ENCODE measurements at regions of chr4 and their contacts with region 1.

Region 1: GRCh38 chr4:38396845-38397547 is 267.0 kb upstream of the KLF3 start:
- DNase-seq: no peak
- ATAC-seq: no peak
- H3K4me3 ChIP-seq: no peak overlapping the region
- H3K27ac ChIP-seq: no peak overlapping the region
- H3K4me1 ChIP-seq: no peaks in the 10 kb centered on the region
- H3K27me3 ChIP-seq: peaks cover 3% of the 10 kb centered on the region
- CTCF ChIP-seq: no peak
- POLR2A ChIP-seq: no peak
- RAD21 ChIP-seq: no peak

Region 2: GRCh38 chr4:38366456-38366855 is 30.5 kb before region 1 on chr4:
- CTCF ChIA-PET with region 1: no interaction called
- POLR2A ChIA-PET with region 1: no interaction called
- dilution Hi-C with region 1: no loop called
- in situ Hi-C with region 1: no loop called
- intact Hi-C with region 1: loop called (anchors 2 kb)
- DNase-seq: no peak
- ATAC-seq: no peak
- H3K4me3 ChIP-seq: no peak overlapping the region
- H3K27ac ChIP-seq: no peak overlapping the region
- H3K4me1 ChIP-seq: peaks cover 2% of the 10 kb centered on the region; the same call in 1 of the 2 replicates
- H3K27me3 ChIP-seq: peaks cover 3% of the 10 kb centered on the region; the same call in 1 of the 2 replicates
- CTCF ChIP-seq: no peak
- POLR2A ChIP-seq: no peak
- RAD21 ChIP-seq: no peak

Measured in IMR-90 (cell line).